Naive thymus-derived CD4-positive, alpha-beta T cell (primary cell): ENCODE measurements at regions of chr15 and their contacts with region 1.

Region 1: GRCh38 chr15:91407237-91407889 is 307.3 kb downstream of the SV2B start:
- DNase-seq: peak in 5 of 9 donors; percentile 4 to 33 (median 7)
- ATAC-seq: peak; percentile 58
- H3K4me3 ChIP-seq: no peak overlapping the region
- H3K4me3 Mint-ChIP-seq: peak overlapping the region in 4 of 10 donors; percentile 2 to 61 (median 30)
- H3K27ac ChIP-seq: no peak overlapping the region
- H3K27ac Mint-ChIP-seq: peak overlapping the region in 3 of 9 donors; percentile 1 to 44 (median 28)
- H3K4me1 ChIP-seq: peaks cover 8 to 11% of the 10 kb centered on the region in 2 donors
- H3K4me1 Mint-ChIP-seq: peaks cover 12 to 29% (median 23%) of the 10 kb centered on the region in 7 donors
- H3K27me3 ChIP-seq: no peaks in the 10 kb centered on the region
- H3K27me3 Mint-ChIP-seq: peaks cover 0 to 12% (median 0%) of the 10 kb centered on the region in 5 donors

Region 2: GRCh38 chr15:91311986-91312385 is 95.4 kb before region 1 on chr15:
- CTCF ChIA-PET with region 1: no interaction called
- POLR2A ChIA-PET with region 1: no interaction called
- intact Hi-C with region 1: loop called in 1 of 2 experiments (anchors 10 kb)
- DNase-seq: peak in 4 of 9 donors; percentile 28 to 53 (median 44)
- ATAC-seq: peak; percentile 78
- H3K4me3 ChIP-seq: peak overlapping the region; percentile 18
- H3K4me3 Mint-ChIP-seq: peak overlapping the region; percentile 68 to 83 (median 79)
- H3K27ac ChIP-seq: no peak overlapping the region
- H3K27ac Mint-ChIP-seq: peak overlapping the region in 5 of 9 donors; percentile 3 to 71 (median 35)
- H3K4me1 ChIP-seq: peaks cover 40 to 61% of the 10 kb centered on the region in 2 donors
- H3K4me1 Mint-ChIP-seq: peaks cover 37 to 90% (median 70%) of the 10 kb centered on the region in 7 donors
- H3K27me3 ChIP-seq: no peaks in the 10 kb centered on the region
- H3K27me3 Mint-ChIP-seq: peaks cover 0 to 60% (median 0%) of the 10 kb centered on the region in 5 donors

Region 3: DNA sequence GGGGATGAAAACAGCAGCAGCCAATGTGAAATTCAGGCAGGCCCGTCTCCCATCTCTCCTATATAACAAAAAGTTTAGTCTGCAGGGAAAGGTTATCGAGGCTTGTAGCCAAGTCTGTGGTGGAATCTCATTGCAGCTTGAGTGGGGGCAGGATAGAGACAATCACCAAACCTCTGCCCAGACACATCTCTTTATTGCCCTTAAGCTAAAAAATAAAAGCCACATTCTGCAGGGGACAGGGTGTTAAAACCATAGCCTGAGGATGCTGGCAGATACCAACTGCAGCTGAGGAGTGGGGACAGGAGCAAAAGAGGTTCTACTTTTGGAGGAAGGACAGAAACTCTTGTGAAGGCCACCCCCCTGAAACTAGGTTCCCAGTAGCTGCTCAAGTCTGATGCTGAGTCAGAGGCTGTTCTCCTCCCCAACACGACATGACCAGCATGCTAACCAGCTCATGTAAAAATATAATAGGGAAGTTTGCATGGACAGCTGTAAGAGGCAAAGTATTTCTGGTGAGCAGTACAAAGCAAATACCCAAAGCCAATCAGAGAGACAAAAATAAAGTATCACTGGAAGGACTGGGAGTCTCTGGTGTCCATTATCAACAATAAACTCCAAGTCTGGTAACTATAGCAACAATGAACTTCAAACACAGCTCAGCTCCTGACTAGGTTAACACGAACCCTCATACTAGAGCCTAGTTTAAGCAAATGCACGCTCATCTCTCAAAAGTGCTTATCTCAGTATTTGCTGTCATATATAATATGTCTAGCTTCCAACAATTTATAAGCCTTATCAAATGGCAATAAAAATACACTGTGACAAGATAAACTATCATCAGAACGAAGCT is 84.0 kb after region 1 on chr15:
- CTCF ChIA-PET with region 1: no interaction called
- POLR2A ChIA-PET with region 1: no interaction called
- intact Hi-C with region 1: no loop called
- DNase-seq: no peak
- ATAC-seq: peak; percentile 37
- H3K4me3 ChIP-seq: no peak overlapping the region
- H3K4me3 Mint-ChIP-seq: no peak overlapping the region
- H3K27ac ChIP-seq: no peak overlapping the region
- H3K27ac Mint-ChIP-seq: peak overlapping the region in 1 of 9 donors; percentile 29
- H3K4me1 ChIP-seq: peaks cover 0 to 6% of the 10 kb centered on the region in 2 donors
- H3K4me1 Mint-ChIP-seq: peaks cover 0 to 5% (median 0%) of the 10 kb centered on the region in 7 donors
- H3K27me3 ChIP-seq: no peaks in the 10 kb centered on the region
- H3K27me3 Mint-ChIP-seq: peaks cover 0 to 16% (median 0%) of the 10 kb centered on the region in 5 donors

Region 4: DNA sequence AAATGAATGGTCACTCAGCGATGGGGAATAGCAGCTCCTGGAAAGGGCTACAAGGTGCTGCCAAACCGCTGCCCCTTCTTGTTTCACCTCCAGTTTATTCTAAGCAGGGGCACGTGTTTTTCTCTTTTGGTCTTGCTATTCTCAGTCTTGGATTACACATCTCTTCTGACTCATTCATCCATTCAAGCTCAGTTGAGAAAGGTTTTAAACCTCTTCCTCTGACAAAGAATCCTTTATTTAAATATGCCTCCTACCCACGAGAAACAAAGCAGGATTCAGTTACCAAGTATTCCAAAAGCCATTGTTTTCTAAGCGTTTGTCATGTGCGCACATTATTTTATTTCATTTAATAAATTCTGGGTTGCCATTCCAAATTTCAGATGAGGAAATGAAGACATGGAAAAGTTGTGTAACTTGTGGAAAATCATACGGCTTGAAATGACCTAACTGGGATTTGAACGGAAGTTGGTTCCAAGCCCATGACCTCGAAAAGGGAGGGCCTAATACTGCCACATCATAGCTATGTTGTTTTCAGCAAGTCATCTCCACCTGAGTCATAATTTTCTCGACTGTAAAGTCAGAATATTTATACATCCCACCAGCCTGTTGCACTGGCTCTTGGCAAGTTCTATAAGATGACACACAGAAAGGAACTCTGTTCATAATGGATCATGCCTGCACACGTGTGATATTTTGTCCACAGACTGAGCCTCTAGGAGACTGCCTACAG is 154.2 kb after region 1 on chr15:
- CTCF ChIA-PET with region 1: no interaction called
- POLR2A ChIA-PET with region 1: no interaction called
- intact Hi-C with region 1: no loop called
- DNase-seq: no peak
- ATAC-seq: no peak
- H3K4me3 ChIP-seq: no peak overlapping the region
- H3K4me3 Mint-ChIP-seq: no peak overlapping the region
- H3K27ac ChIP-seq: no peak overlapping the region
- H3K27ac Mint-ChIP-seq: peak overlapping the region in 1 of 9 donors; percentile 0
- H3K4me1 ChIP-seq: no peaks in the 10 kb centered on the region
- H3K4me1 Mint-ChIP-seq: peaks cover 0 to 2% (median 0%) of the 10 kb centered on the region in 7 donors
- H3K27me3 ChIP-seq: no peaks in the 10 kb centered on the region
- H3K27me3 Mint-ChIP-seq: peaks cover 0 to 25% (median 5%) of the 10 kb centered on the region in 5 donors